ENCODE measurements at regions of chr10 and their contacts with region 1.

Region 1: GRCh38 chr10:104406715-104407650 is 53.4 kb downstream of the CFAP58 start:
- DNase-seq: peak; percentile 47
- ATAC-seq: peak; percentile 43; the same call in 1 of the 2 replicates
- H3K4me3 ChIP-seq: no peak overlapping the region
- H3K27ac ChIP-seq: no peak overlapping the region
- H3K4me1 ChIP-seq: no peaks in the 10 kb centered on the region
- H3K27me3 ChIP-seq: peaks cover 49% of the 10 kb centered on the region
- CTCF ChIP-seq: peak; percentile 59

Region 2: GRCh38 chr10:104090611-104091010 is 316.4 kb before region 1 on chr10:
- CTCF ChIA-PET with region 1: no interaction called
- POLR2A ChIA-PET with region 1: no interaction called
- intact Hi-C with region 1: no loop called
- DNase-seq: no peak
- ATAC-seq: no peak
- H3K4me3 ChIP-seq: no peak overlapping the region
- H3K27ac ChIP-seq: no peak overlapping the region
- H3K4me1 ChIP-seq: peaks cover 8% of the 10 kb centered on the region
- H3K27me3 ChIP-seq: no peaks in the 10 kb centered on the region
- CTCF ChIP-seq: no peak

Region 3: DNA sequence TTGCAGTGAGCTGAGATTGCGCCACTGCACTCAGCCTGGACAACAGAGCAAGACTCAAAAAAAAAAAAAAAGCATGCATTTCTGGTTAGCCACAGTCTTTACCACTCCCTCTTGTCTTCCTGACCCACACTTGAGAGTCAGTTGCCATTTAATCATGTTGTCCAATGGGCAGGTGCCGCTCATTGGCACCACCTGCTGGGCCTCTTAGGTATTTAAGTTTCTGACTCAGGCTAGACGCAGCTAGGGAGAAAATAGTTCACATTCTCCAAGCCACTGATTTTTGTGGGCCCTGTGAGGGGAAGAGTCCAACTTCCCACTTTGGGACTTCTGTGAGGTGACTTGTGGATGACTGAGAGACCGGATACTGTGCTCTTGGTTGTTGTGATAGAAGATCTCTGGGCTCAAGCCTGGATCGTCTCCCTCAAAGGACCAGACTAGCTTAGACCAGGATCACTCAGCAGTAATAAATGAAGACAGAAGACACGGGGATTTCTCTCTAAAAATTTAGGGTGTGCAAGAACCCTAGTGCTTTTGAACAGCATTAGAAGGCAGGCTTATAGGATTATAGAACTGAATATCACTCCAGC is 207.4 kb after region 1 on chr10:
- CTCF ChIA-PET with region 1: interaction called, 6 read pairs
- POLR2A ChIA-PET with region 1: no interaction called
- intact Hi-C with region 1: loop called (anchors 5 kb)
- DNase-seq: peak; percentile 51
- ATAC-seq: peak; percentile 40; the same call in 1 of the 2 replicates
- H3K4me3 ChIP-seq: no peak overlapping the region
- H3K27ac ChIP-seq: no peak overlapping the region
- H3K4me1 ChIP-seq: no peaks in the 10 kb centered on the region
- H3K27me3 ChIP-seq: peaks cover 10% of the 10 kb centered on the region; the same call in 1 of the 2 replicates
- CTCF ChIP-seq: peak; percentile 59

Region 4: GRCh38 chr10:104925232-104925851 is 518.4 kb after region 1 on chr10:
- CTCF ChIA-PET with region 1: no interaction called
- POLR2A ChIA-PET with region 1: no interaction called
- intact Hi-C with region 1: loop called (anchors 5 kb)
- DNase-seq: peak; percentile 49
- ATAC-seq: no peak
- H3K4me3 ChIP-seq: no peak overlapping the region
- H3K27ac ChIP-seq: no peak overlapping the region
- H3K4me1 ChIP-seq: no peaks in the 10 kb centered on the region
- H3K27me3 ChIP-seq: no peaks in the 10 kb centered on the region
- CTCF ChIP-seq: peak; percentile 58

Measured in PC-3 (cell line).